ENCODE measurements at regions of chr13 and their contacts with region 1.

Region 1: DNA sequence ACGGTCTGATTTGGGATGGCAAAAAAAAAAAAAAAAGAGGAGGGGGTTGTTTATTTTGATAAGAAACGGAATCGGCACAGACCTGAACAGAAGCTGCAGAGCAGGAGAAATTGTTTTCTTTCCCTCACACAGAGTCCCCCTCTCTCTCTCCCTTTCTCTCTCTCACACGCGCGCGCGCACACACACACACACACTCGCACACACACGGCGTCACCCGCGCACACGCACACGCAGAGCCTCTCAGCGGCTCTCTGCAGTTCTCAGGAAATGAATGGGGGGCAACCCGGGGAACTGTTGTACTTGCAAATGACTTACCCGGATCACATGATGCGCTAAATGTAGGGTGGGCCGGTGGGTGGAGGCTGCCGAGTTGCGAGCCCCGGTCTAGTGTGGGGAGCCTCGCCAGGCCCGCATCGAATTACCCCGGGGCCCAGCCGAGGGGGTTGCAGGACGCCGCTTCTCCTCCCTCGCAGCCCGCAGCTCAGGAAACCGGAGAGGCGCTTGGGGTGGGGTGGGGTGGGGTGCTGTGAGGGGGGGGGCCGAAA is 475 bp downstream of the KLF12 start:
- DNase-seq: peak; percentile 85

Region 2: GRCh38 chr13:72983085-72983768 is 1150.5 kb before region 1 on chr13:
- intact Hi-C with region 1: no loop called
- DNase-seq: no peak

Region 3: GRCh38 chr13:73835138-73835721 is 298.5 kb before region 1 on chr13:
- intact Hi-C with region 1: loop called (anchors 10 kb)
- DNase-seq: no peak

Region 4: DNA sequence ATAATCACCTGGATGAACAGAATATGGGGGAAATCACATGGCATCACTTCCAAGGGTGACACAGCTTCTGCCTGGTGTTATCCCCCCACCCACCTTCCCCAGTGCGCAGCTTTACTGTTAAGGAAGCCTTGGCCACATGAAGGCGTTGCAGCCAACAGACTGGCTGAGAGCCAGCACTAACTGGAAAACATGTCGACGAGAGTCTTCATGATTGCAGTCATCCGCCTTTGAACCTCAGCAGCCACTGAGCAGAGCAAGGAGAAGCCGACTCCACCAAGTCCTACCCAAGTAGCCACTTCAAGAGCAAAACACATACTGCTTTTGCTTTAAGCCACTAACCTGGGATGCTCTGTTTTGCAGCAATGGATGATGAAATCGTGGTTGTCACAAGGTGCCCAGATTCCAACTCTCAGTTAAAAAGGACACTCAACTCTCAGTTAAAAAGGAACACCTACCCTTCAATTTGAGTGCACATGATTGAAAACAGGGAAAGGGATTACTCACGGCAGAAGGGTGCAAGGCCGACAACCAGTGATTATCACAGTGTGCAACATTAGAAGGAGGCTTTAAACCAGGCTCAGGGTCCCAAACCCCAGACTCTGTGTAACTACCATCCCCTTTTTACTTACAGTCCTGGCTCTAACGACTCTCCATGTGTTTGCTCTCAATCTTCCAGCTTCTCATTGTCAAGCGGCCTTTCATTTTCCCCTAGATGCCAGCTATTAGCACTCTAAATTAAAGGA is 148.6 kb before region 1 on chr13:
- intact Hi-C with region 1: loop called (anchors 10 kb)
- DNase-seq: no peak

Region 5: GRCh38 chr13:74080762-74081161 is 53.0 kb before region 1 on chr13:
- intact Hi-C with region 1: loop called (anchors 5 kb)
- DNase-seq: no peak

Region 6: DNA sequence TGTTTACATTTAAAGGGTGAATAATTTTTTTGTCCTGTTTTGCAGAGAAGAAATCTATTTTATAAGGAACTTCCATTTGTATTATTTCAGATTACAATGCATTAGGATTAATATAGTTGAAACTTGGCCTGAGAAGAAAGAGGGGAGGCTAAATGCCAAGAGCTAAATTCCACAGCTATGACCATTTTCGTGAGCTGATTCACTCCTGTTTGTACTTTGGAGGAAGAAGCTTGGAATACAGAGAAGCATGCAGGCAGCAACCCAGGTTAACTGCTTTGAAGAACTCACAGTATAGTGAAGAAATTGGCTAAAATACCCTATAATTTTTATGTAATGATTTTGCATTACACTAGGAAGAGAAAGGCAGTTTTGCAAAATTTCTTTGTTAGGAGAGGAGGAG is 309.9 kb after region 1 on chr13:
- intact Hi-C with region 1: no loop called
- DNase-seq: no peak

Region 7: GRCh38 chr13:74575729-74576125 is 442.0 kb after region 1 on chr13:
- intact Hi-C with region 1: loop called (anchors 10 kb)
- DNase-seq: peak; percentile 94